ENCODE measurements at regions of chr2 and their contacts with region 1.

Region 1: GRCh38 chr2:220034426-220035130 is 407.1 kb downstream of the SLC4A3 start:
- DNase-seq: no peak
- H3K4me3 Mint-ChIP-seq: no peak overlapping the region
- H3K27ac Mint-ChIP-seq: no peak overlapping the region
- H3K4me1 Mint-ChIP-seq: no peaks in the 10 kb centered on the region
- H3K27me3 Mint-ChIP-seq: no peaks in the 10 kb centered on the region
- CTCF ChIP-seq: no peak

Region 2: GRCh38 chr2:219560037-219560892 is 474.3 kb before region 1 on chr2:
- CTCF ChIA-PET with region 1: no interaction called
- intact Hi-C with region 1: no loop called
- DNase-seq: peak; percentile 30
- H3K4me3 Mint-ChIP-seq: no peak overlapping the region
- H3K27ac Mint-ChIP-seq: no peak overlapping the region
- H3K4me1 Mint-ChIP-seq: no peaks in the 10 kb centered on the region
- H3K27me3 Mint-ChIP-seq: no peaks in the 10 kb centered on the region
- CTCF ChIP-seq: peak; percentile 96

Region 3: GRCh38 chr2:220015576-220015975 is 19.0 kb before region 1 on chr2:
- CTCF ChIA-PET with region 1: no interaction called
- intact Hi-C with region 1: loop called (anchors 2 kb)
- DNase-seq: no peak
- H3K4me3 Mint-ChIP-seq: no peak overlapping the region
- H3K27ac Mint-ChIP-seq: no peak overlapping the region
- H3K4me1 Mint-ChIP-seq: no peaks in the 10 kb centered on the region
- H3K27me3 Mint-ChIP-seq: no peaks in the 10 kb centered on the region
- CTCF ChIP-seq: no peak

Region 4: DNA sequence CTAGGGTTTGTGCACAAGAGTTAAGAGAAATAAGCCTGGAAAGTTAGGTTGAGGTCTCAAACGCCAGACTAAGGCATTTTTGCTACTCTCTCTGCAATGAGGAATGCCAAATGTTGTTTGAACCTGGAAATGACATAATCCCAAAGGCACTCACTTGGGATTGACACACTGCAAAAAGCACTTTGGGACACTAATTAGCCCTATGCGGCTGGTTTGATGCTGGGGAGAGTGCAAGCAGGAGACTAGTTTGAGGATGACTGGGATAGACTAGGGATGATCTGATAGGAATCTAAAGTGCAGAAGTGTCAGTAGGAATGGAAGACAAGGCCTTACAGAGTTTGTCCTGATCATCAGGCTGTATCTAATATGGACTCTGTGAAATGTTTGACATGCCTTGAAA is 61.8 kb after region 1 on chr2:
- CTCF ChIA-PET with region 1: no interaction called
- intact Hi-C with region 1: no loop called
- DNase-seq: no peak
- H3K4me3 Mint-ChIP-seq: no peak overlapping the region
- H3K27ac Mint-ChIP-seq: no peak overlapping the region
- H3K4me1 Mint-ChIP-seq: no peaks in the 10 kb centered on the region
- H3K27me3 Mint-ChIP-seq: peaks cover 20% of the 10 kb centered on the region
- CTCF ChIP-seq: no peak

Region 5: DNA sequence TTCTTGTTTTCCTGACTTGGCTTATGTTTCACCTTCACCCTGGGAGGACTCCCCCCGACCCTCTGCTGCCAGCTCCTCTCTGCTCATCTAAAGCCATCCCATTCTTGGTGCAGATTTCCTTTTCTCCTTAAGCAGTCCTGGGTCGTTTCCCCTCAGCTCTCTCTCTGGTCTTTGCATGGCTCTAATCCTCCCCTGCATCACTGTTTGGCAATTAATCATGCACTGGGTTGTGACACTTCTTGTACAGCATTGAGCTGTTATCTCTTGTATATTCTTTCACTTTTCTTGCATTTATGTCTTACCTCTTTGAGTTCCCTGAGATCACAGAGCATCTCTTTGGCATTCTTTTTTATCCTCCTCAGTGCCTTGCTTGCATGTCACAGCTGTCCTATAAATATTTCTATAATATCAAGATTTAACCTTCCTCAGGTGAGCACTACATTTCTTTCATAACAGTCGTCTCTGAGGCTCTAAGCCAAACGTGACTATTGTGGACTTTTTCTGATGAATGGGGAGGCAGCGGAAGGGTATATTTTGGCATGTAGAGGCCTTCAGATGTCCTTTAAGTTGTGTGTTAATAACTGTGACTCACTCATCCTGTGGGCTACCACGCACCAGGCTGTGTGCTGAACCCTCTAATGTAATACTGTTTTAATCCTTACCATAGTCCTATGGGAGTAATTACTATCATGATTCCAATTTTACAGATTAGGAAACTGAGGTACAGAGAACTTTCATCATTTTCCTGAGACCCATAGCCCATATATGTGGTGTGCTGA is 100.4 kb after region 1 on chr2:
- CTCF ChIA-PET with region 1: no interaction called
- intact Hi-C with region 1: no loop called
- DNase-seq: no peak
- H3K4me3 Mint-ChIP-seq: no peak overlapping the region
- H3K27ac Mint-ChIP-seq: no peak overlapping the region
- H3K4me1 Mint-ChIP-seq: no peaks in the 10 kb centered on the region
- H3K27me3 Mint-ChIP-seq: no peaks in the 10 kb centered on the region
- CTCF ChIP-seq: no peak

Region 6: DNA sequence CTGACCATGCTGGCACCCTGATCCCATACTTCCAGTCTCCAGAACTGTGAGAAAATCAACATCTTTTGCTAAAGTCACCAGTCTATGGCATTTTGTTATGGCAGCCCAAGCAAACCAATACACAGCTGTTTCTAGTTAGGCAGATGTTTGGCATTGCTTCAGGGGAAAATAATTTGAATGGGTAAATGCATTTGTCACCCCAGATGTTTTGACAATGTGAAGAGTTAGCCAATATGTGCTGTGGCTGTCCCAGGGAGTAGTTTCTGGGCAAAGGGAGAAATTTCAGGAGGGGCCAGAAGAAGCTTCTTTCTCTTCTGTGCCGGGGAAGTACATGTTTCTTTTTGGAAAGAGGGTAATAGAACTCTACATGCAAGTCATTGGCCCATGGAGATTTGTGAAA is 211.8 kb after region 1 on chr2:
- CTCF ChIA-PET with region 1: no interaction called
- intact Hi-C with region 1: no loop called
- DNase-seq: no peak
- H3K4me3 Mint-ChIP-seq: no peak overlapping the region
- H3K27ac Mint-ChIP-seq: no peak overlapping the region
- H3K4me1 Mint-ChIP-seq: no peaks in the 10 kb centered on the region
- H3K27me3 Mint-ChIP-seq: no peaks in the 10 kb centered on the region
- CTCF ChIP-seq: no peak

Region 7: GRCh38 chr2:220555961-220556360 is 521.4 kb after region 1 on chr2:
- CTCF ChIA-PET with region 1: interaction called, 10 read pairs
- intact Hi-C with region 1: no loop called
- DNase-seq: no peak
- H3K4me3 Mint-ChIP-seq: no peak overlapping the region
- H3K27ac Mint-ChIP-seq: no peak overlapping the region
- H3K4me1 Mint-ChIP-seq: peaks cover 12% of the 10 kb centered on the region
- H3K27me3 Mint-ChIP-seq: no peaks in the 10 kb centered on the region
- CTCF ChIP-seq: no peak